ENCODE measurements at regions of chr18 and their contacts with region 1.

Region 1: DNA sequence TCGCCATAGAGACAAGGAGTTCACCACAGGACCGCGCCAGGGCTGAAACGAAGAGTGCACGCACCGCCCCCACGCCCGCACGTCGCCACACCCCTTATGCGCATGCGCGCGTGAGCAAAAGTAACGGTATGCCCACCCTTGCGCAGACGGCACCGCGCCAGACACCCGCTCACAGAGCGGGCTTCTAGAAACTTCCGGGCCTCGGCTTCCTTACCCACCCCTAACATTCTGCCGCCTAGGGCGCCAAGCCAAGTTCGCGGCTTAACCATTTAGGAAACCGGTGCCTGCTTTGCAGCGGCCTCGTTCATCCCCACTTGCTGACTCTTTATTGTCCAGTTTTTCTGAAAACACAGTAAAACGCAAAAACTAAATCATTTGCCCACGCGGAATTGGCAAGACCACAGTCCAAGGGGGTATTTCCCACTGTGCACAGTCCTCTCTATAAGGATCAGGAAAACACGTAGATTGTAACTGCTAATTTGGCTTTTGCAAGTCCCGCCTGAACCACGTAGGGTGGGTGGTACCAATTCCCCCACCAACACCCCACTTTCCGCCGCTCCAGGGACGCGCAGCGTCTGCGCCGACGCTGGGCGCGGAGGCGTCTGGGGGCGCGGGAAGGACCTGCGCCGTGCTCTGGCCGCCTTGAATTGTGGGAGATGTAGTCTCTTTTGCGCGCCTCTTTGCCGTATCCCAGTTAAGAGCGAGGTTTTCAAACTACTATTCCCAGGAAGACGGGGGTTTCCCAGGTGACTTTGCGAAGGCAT is at the starts of genes FBXO15 and TIMM21:
- DNase-seq: peak; percentile 91 to 99 (median 95)

Region 2: GRCh38 chr18:73992242-73993022 is 155.5 kb before region 1 on chr18:
- intact Hi-C with region 1: no loop called
- DNase-seq: no peak

Region 3: GRCh38 chr18:74126684-74127482 is 21.1 kb before region 1 on chr18:
- intact Hi-C with region 1: loop called (anchors 2 kb)
- DNase-seq: no peak

Region 4: GRCh38 chr18:74291771-74292540 is 144.0 kb after region 1 on chr18 and contains the start of gene CYB5A:
- intact Hi-C with region 1: loop called (anchors 5 kb)
- DNase-seq: peak; percentile 99 to 100 (median 100)

Measured in posterior cingulate gyrus (tissue), 11 donors.